OCI-LY7 (cell line): ENCODE measurements at regions of chr1 and their contacts with region 1.

Region 1: GRCh38 chr1:24201941-24202440 is 14.9 kb upstream of the IFNLR1 start:
- DNase-seq: peak; percentile 63
- H3K4me3 ChIP-seq: peak overlapping the region; percentile 72
- H3K27ac ChIP-seq: peak overlapping the region; percentile 72
- H3K4me1 ChIP-seq: peaks cover 86% of the 10 kb centered on the region
- CTCF ChIP-seq: peak; percentile 95

Region 2: DNA sequence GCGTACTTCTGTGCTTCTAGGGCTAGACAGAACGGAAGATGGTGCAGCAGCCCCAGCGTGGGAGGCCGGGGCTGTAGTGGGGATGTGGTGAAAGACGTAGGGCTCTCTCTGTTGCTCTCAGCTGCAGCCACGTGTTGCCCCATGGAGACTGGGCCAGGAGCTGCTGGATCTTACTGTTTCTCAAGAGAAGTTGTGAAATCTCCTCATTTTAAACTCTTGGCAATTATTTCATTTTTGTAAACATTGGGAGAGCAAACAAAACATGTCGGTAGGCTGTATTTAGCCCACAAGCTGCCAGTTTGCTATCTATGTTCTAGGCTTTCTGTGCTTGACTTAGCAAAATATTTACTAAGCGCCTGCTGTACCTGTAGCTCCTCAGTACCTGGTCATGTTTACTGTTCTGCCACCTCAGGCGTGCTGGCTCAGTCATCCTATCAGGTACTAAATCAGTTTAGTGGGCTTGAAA is 474.6 kb before region 1 on chr1:
- CTCF ChIA-PET with region 1: no interaction called
- POLR2A ChIA-PET with region 1: no interaction called
- intact Hi-C with region 1: no loop called
- DNase-seq: peak; percentile 40
- H3K4me3 ChIP-seq: no peak overlapping the region
- H3K27ac ChIP-seq: peak overlapping the region; percentile 15
- H3K4me1 ChIP-seq: peaks cover 46% of the 10 kb centered on the region
- CTCF ChIP-seq: no peak

Region 3: GRCh38 chr1:23979387-23979877 is 222.6 kb before region 1 on chr1:
- CTCF ChIA-PET with region 1: no interaction called
- POLR2A ChIA-PET with region 1: no interaction called
- intact Hi-C with region 1: no loop called
- DNase-seq: no peak
- H3K4me3 ChIP-seq: peak overlapping the region; percentile 96
- H3K27ac ChIP-seq: peak overlapping the region; percentile 94
- H3K4me1 ChIP-seq: peaks cover 75% of the 10 kb centered on the region
- CTCF ChIP-seq: no peak

Region 4: GRCh38 chr1:24070821-24071393 is 131.1 kb before region 1 on chr1:
- CTCF ChIA-PET with region 1: no interaction called
- POLR2A ChIA-PET with region 1: no interaction called
- intact Hi-C with region 1: loop called (anchors 1 kb)
- DNase-seq: peak; percentile 87
- H3K4me3 ChIP-seq: no peak overlapping the region
- H3K27ac ChIP-seq: no peak overlapping the region
- H3K4me1 ChIP-seq: peaks cover 8% of the 10 kb centered on the region
- CTCF ChIP-seq: peak; percentile 95

Region 5: DNA sequence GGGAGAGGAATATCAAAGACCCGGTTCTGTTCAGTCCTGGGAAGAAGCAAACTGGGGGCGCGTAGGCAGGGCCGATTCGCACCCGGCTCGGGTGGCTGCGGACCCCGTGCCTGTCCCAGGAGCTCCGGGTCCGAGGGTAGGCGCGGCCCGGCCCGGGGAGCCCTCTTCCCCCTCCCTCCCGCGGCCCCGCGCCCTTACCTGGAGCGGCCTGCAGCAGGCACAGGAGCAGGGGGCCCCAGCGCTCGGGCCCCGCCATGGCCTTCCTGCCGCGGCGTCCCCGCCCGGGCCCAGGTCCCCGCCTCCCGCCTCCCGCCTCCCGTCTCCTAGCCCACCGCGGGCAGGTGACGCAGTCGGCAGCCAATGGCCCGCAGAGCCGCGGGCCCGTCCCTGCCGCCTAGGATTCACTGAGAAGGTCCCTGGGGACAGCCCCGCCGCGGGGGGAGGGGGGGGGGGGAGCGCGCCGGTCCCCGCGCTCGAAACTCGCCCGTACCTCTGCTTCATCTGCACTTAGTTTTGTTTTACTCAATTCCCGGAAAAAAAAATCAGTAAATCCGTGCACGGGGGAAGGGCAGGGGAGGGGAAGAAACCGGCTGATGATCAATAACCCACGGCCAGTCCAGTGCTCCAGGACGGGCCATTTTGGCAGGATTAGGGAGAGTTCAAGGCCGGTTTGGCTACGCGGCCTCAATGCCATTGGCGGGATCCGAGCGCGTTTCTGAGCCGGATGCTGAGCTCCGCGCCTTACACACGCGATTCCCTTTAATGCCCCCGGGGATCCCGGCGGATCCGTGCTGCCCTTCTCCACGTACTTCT is 14.8 kb before region 1 on chr1 and contains the start of gene IFNLR1:
- CTCF ChIA-PET with region 1: interaction called, 13 read pairs
- POLR2A ChIA-PET with region 1: interaction called, 29 read pairs
- intact Hi-C with region 1: no loop called
- DNase-seq: peak; percentile 91
- H3K4me3 ChIP-seq: peak within 1 kb of the TSS; percentile 97
- H3K27ac ChIP-seq: peak within 1 kb of the TSS; percentile 100
- H3K4me1 ChIP-seq: peaks cover 81% of the 10 kb centered on the region
- CTCF ChIP-seq: no peak
- total RNA-seq, gene IFNLR1: 24.6 and 29.4 TPM in 2 replicates

Region 6: GRCh38 chr1:24235921-24236781 is 34.2 kb after region 1 on chr1:
- CTCF ChIA-PET with region 1: no interaction called
- POLR2A ChIA-PET with region 1: no interaction called
- intact Hi-C with region 1: no loop called
- DNase-seq: peak; percentile 16
- H3K4me3 ChIP-seq: no peak overlapping the region
- H3K27ac ChIP-seq: no peak overlapping the region
- H3K4me1 ChIP-seq: peaks cover 8% of the 10 kb centered on the region
- CTCF ChIP-seq: no peak

Region 7: GRCh38 chr1:24391882-24392603 is 190.1 kb after region 1 on chr1:
- CTCF ChIA-PET with region 1: interaction called, 37 read pairs
- POLR2A ChIA-PET with region 1: interaction called, 45 read pairs
- intact Hi-C with region 1: loop called (anchors 1 kb)
- DNase-seq: peak; percentile 89
- H3K4me3 ChIP-seq: peak overlapping the region; percentile 58
- H3K27ac ChIP-seq: peak overlapping the region; percentile 88
- H3K4me1 ChIP-seq: peaks cover 44% of the 10 kb centered on the region
- CTCF ChIP-seq: peak; percentile 92

Region 8: GRCh38 chr1:24635195-24635843 is 433.3 kb after region 1 on chr1:
- CTCF ChIA-PET with region 1: no interaction called
- POLR2A ChIA-PET with region 1: no interaction called
- intact Hi-C with region 1: loop called (anchors 2 kb)
- DNase-seq: peak; percentile 86
- H3K4me3 ChIP-seq: no peak overlapping the region
- H3K27ac ChIP-seq: no peak overlapping the region
- H3K4me1 ChIP-seq: peaks cover 4% of the 10 kb centered on the region
- CTCF ChIP-seq: peak; percentile 97